Naive thymus-derived CD8-positive, alpha-beta T cell (primary cell): ENCODE measurements at regions of chr3 and their contacts with region 1.

Region 1: GRCh38 chr3:108602249-108602934 is 12.9 kb downstream of the DZIP3 start:
- DNase-seq: peak in 9 of 10 donors; percentile 5 to 76 (median 57)
- ATAC-seq: peak; percentile 92 to 95
- H3K4me3 Mint-ChIP-seq: peak overlapping the region; percentile 8 to 87 (median 74)
- H3K27ac Mint-ChIP-seq: peak overlapping the region; percentile 83 to 97 (median 93)
- H3K4me1 Mint-ChIP-seq: peaks cover 18 to 67% (median 51%) of the 10 kb centered on the region in 4 donors
- H3K27me3 Mint-ChIP-seq: no peaks in the 10 kb centered on the region

Region 2: GRCh38 chr3:108589146-108589997 is 13.0 kb before region 1 on chr3 and contains the starts of genes CIP2A and DZIP3:
- POLR2A ChIA-PET with region 1: interaction called, 131 read pairs
- DNase-seq: peak; percentile 69 to 90 (median 88)
- ATAC-seq: peak; percentile 80 to 85
- H3K4me3 Mint-ChIP-seq: peak within 1 kb of the TSS; percentile 95 to 100 (median 98)
- H3K27ac Mint-ChIP-seq: peak within 1 kb of the TSS; percentile 98 to 100 (median 99)
- H3K4me1 Mint-ChIP-seq: peaks cover 17 to 44% (median 32%) of the 10 kb centered on the region in 4 donors
- H3K27me3 Mint-ChIP-seq: no peaks in the 10 kb centered on the region
- polyA plus RNA-seq, gene CIP2A: 1.7 to 2.9 (median 1.9) TPM
- polyA plus RNA-seq, gene DZIP3: 8.9 to 22.5 (median 15.8) TPM